ENCODE measurements at regions of chr7 and their contacts with region 1.

Region 1: DNA sequence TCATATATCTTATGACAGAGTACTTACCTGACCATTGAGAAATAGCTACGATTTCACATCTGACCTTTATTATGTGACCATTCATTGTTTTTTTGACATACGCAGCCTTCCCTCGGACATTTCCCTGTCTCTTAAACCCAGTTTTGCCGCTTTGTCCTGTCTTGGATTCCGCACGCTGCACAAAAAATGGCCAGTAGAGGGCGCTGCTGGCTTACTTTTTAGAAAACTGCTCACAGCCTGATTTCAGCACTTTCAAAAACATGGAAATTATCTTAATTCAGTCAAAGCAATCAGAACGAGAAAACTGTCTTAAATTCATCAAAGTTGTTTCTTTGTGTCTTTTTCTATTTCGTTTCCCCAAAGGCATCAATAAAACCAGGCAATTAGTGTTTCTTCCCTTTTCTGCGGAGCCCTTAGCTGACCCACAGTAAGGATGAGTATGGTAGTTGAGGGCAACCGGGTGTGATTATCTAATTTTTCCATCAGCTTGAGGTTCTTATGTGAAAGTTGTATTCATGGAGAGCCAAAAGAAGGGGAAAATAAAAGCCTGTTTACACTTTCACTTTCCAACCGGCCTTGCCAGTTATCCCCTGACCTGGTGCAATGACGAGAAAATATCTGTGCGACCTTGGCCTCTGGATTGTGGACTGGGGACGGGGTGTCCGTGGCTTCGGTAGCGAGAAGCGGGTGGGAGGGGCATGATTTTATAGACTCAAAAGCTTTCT is 144.4 kb downstream of the DYNC1I1 start:
- DNase-seq: peak; percentile 57
- H3K4me3 ChIP-seq: peak overlapping the region; percentile 6 to 14; a peak in 2 of 4 replicates
- H3K27ac ChIP-seq: no peak overlapping the region
- H3K4me1 ChIP-seq: no peaks in the 10 kb centered on the region
- H3K27me3 ChIP-seq: no peaks in the 10 kb centered on the region
- CTCF ChIP-seq: peak; percentile 100
- EP300 ChIP-seq: no peak
- RAD21 ChIP-seq: peak; percentile 99

Region 2: DNA sequence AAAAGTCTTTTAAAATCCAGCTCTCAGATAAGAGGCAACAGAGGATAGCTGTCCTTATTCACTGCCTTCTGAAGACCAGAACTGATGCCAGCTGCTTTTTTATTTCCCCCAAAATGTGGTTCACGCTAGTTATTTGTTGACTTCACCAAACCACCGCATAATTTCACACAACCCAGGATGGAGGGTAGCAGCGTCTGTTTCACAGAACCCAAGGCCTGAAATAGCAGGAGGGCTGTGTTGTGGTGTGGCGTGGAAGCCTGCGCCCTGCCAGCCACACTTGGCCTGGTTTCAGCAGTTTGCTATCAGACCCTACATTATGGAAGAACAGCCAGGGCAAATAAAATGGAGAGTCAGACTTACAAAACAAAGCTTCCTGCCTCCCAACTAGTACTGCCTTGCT is 11.0 kb after region 1 on chr7:
- CTCF ChIA-PET with region 1: interaction called, 42 read pairs
- POLR2A ChIA-PET with region 1: no interaction called
- DNase-seq: peak; percentile 36
- H3K4me3 ChIP-seq: no peak overlapping the region
- H3K27ac ChIP-seq: no peak overlapping the region
- H3K4me1 ChIP-seq: peaks cover 0 to 9% of the 10 kb centered on the region in 2 experiments; a peak in 2 of 4 replicates
- H3K27me3 ChIP-seq: no peaks in the 10 kb centered on the region
- CTCF ChIP-seq: no peak
- EP300 ChIP-seq: peak in 1 of 2 experiments; percentile 29; a peak in 1 of 4 replicates
- RAD21 ChIP-seq: no peak

Region 3: GRCh38 chr7:95963446-95963990 is 46.8 kb after region 1 on chr7:
- CTCF ChIA-PET with region 1: interaction called, 12 read pairs
- POLR2A ChIA-PET with region 1: no interaction called
- DNase-seq: no peak
- H3K4me3 ChIP-seq: no peak overlapping the region
- H3K27ac ChIP-seq: no peak overlapping the region
- H3K4me1 ChIP-seq: no peaks in the 10 kb centered on the region
- H3K27me3 ChIP-seq: no peaks in the 10 kb centered on the region
- CTCF ChIP-seq: no peak
- EP300 ChIP-seq: no peak
- RAD21 ChIP-seq: no peak

Region 4: DNA sequence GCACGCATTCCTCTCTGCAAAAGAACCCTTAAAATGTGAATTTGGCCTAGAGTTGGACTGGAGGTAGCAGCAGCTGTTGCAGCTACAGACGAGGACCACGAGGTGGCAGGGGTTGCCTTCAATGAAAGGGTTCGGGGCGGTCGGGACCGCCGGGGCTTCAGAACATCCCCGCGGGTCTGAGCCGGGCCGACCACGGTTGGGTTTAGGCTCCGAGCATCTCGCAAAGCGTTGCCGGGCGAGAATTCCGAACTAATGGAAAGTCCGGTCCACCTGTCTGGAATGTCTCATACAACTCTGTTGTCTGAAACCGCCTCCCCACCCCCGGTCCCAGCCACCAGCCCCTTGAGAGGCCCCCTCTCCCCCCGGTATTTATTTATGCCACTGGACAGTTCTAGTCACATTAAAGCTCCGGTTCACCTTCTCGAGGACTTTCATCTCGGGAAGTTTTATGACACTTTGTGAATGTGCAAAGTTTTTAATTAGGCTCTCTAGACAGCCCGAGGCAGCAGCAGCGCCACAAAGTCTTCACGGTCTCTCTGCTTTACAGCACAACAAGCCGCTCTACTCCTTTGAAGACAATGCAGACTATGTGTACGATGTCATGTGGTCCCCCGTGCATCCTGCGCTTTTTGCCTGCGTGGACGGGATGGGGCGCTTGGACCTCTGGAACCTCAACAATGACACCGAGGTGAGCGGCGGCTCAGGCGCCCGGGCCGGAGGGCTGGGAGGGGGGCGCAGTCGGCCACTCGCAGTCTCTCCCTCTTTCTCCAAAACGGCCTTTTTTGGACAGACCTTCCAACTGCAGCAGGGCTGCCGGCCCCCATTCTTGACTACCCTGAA is 159.0 kb after region 1 on chr7:
- CTCF ChIA-PET with region 1: interaction called, 32 read pairs
- POLR2A ChIA-PET with region 1: no interaction called
- DNase-seq: peak; percentile 91
- H3K4me3 ChIP-seq: peak overlapping the region; percentile 68 to 69
- H3K27ac ChIP-seq: no peak overlapping the region
- H3K4me1 ChIP-seq: peaks cover 3 to 7% of the 10 kb centered on the region in 2 experiments; a peak in 3 of 4 replicates
- H3K27me3 ChIP-seq: peaks cover 11% of the 10 kb centered on the region; the same call in 1 of the 2 replicates
- CTCF ChIP-seq: peak; percentile 99
- EP300 ChIP-seq: no peak
- RAD21 ChIP-seq: peak; percentile 98

Region 5: DNA sequence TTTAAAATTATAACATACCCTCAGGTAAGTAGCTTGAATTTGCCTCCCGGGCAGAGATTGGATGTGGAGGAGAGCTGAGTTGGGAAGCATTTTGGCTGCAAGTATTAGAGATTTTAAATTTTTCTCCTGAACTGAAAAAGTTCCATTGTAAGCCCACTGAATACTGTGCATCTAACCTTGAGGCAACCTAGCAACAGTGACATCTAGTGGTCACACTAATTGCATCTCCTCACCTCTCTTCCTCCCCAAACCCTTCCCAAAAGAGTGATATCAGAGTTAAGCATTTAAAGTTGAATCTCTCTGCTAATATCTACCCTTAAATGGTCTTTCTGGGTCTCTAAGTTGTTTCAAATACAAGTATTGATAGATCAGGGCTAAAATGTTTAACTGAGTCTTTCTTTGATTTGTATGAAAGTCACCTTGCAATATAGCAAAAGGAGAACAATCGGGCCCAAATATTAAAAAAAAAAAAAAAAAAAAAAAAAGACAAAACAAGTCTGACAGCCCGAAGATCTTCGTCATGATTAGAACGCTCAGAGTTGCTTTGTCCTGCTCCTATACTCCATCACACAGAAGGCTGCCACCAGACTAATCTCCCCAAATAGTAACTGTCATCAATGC is 1148.3 kb after region 1 on chr7:
- CTCF ChIA-PET with region 1: interaction called, 51 read pairs
- POLR2A ChIA-PET with region 1: no interaction called
- DNase-seq: peak; percentile 78
- H3K4me3 ChIP-seq: peak overlapping the region in 1 of 2 experiments; percentile 18; a peak in 1 of 4 replicates
- H3K27ac ChIP-seq: no peak overlapping the region
- H3K4me1 ChIP-seq: no peaks in the 10 kb centered on the region
- H3K27me3 ChIP-seq: no peaks in the 10 kb centered on the region
- CTCF ChIP-seq: peak; percentile 98
- EP300 ChIP-seq: no peak
- RAD21 ChIP-seq: peak; percentile 74

Measured in SK-N-SH (cell line).